H1 (cell line): ENCODE measurements at regions of chr17 and their contacts with region 1.

Region 1: DNA sequence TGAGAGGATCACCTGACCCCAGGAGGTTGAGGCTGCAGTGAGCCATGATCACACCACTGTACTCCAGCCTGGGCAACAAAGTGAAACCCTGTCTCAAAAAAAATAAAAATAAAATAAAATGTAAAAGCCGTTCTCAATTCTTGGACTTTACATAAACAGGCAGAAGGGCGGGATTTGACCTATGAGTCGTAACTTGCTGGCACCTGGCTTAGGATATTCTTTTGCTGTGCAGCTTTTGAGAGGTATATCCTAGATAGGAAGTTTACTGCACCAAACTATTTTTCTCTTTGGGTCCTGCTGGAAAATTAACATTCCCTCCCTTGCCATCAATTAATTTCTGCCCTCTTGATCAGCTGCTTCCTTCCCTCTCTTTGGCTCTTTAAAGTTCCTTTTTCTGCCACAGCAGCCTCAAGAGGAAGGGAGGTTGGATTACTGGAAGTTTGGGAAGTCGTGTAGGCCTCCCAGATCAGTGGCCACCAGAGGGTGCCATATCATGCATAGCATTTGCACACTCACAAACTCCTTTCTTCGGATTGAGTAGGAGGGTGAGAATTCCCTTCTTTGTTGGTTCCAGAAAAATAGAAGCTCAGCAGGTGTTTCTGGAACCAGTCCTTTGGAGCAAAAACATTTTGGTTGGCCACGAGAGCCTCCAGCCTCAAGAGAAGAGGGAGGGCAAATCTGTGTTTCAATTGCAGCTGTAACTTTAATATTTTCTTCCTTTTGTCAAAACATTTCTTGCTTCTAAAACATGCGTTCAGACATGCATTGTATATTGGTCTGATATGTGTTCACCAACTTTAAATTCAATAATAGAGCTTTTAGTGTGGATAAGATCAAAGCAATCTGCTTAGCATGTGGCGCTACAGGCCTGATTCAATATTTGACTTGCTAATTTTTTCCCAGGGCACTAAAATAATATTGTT is 147.3 kb downstream of the CCDC182 start:
- DNase-seq: peak; percentile 49 to 79
- H3K4me3 ChIP-seq: no peak overlapping the region
- H3K27ac ChIP-seq: no peak overlapping the region
- H3K4me1 ChIP-seq: peaks cover 0 to 3% (median 1%) of the 10 kb centered on the region in 4 experiments; a peak in 2 of 7 replicates
- H3K27me3 ChIP-seq: no peaks in the 10 kb centered on the region
- CTCF ChIP-seq: peak; percentile 69 to 85 (median 83)
- EP300 ChIP-seq: no peak
- POLR2A ChIP-seq: no peak
- RAD21 ChIP-seq: peak; percentile 82 to 85

Region 2: GRCh38 chr17:57552114-57552624 is 45.6 kb before region 1 on chr17:
- CTCF ChIA-PET with region 1: interaction called, 26 read pairs
- POLR2A ChIA-PET with region 1: no interaction called
- DNase-seq: peak in 1 of 2 experiments; percentile 82
- H3K4me3 ChIP-seq: no peak overlapping the region
- H3K27ac ChIP-seq: peak overlapping the region; percentile 29; the same call in 1 of the 2 replicates
- H3K4me1 ChIP-seq: peaks cover 8 to 46% (median 25%) of the 10 kb centered on the region in 4 experiments
- H3K27me3 ChIP-seq: no peaks in the 10 kb centered on the region
- CTCF ChIP-seq: peak; percentile 76 to 98 (median 87)
- EP300 ChIP-seq: no peak
- POLR2A ChIP-seq: no peak
- RAD21 ChIP-seq: peak; percentile 56 to 69

Region 3: GRCh38 chr17:57577751-57578607 is 19.8 kb before region 1 on chr17:
- CTCF ChIA-PET with region 1: interaction called, 10 read pairs
- POLR2A ChIA-PET with region 1: no interaction called
- DNase-seq: no peak
- H3K4me3 ChIP-seq: no peak overlapping the region; a peak in 2 of 8 replicates
- H3K27ac ChIP-seq: 0 out of 2 replicates have a peak overlapping the region, but pooled peaks have one; percentile 3
- H3K4me1 ChIP-seq: peaks cover 0 to 14% (median 2%) of the 10 kb centered on the region in 4 experiments; a peak in 3 of 7 replicates
- H3K27me3 ChIP-seq: no peaks in the 10 kb centered on the region
- CTCF ChIP-seq: no peak
- EP300 ChIP-seq: no peak
- POLR2A ChIP-seq: no peak
- RAD21 ChIP-seq: no peak

Region 4: GRCh38 chr17:57622683-57623433 is 25.1 kb after region 1 on chr17:
- CTCF ChIA-PET with region 1: interaction called, 14 read pairs
- POLR2A ChIA-PET with region 1: no interaction called
- DNase-seq: no peak
- H3K4me3 ChIP-seq: no peak overlapping the region
- H3K27ac ChIP-seq: no peak overlapping the region
- H3K4me1 ChIP-seq: no peaks in the 10 kb centered on the region
- H3K27me3 ChIP-seq: no peaks in the 10 kb centered on the region
- CTCF ChIP-seq: no peak
- EP300 ChIP-seq: no peak
- POLR2A ChIP-seq: no peak
- RAD21 ChIP-seq: no peak

Region 5: DNA sequence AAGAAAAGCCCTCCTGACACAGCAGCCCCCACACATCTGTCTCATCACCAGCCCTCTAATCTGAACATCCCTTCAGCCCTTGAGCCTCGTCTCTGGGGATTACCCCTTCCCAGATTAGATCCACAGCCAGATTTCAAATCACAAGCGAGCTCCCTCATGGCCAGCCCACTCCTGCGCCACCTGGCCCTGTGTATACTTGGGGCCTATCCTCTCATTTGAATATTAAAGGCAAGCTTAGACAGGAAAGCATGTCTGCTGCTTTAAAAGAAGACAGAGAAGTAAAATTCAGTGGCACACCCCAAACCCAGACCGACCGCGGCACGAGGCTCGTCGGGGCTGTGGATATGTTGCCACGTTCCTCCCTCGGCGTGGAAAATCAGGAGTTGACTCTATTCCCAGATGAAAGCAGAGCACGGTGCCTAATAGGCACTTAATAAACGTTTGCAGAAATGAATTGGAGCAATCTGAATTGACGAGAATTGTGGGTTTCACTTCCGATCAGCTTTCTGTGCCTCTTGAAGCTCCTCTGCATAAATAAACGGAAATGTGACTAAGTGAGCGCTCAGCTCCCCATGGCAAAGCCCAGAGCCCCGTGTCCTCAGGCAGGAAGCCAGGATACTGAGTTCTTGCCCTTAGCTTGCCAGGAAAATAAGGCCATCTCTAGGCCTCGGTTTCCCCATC is 39.3 kb after region 1 on chr17:
- CTCF ChIA-PET with region 1: interaction called, 15 read pairs
- POLR2A ChIA-PET with region 1: interaction called, 3 read pairs
- DNase-seq: no peak
- H3K4me3 ChIP-seq: no peak overlapping the region
- H3K27ac ChIP-seq: no peak overlapping the region
- H3K4me1 ChIP-seq: peaks cover 0 to 5% (median 4%) of the 10 kb centered on the region in 4 experiments; a peak in 3 of 7 replicates
- H3K27me3 ChIP-seq: no peaks in the 10 kb centered on the region
- CTCF ChIP-seq: no peak
- EP300 ChIP-seq: no peak
- POLR2A ChIP-seq: no peak
- RAD21 ChIP-seq: no peak

Region 6: DNA sequence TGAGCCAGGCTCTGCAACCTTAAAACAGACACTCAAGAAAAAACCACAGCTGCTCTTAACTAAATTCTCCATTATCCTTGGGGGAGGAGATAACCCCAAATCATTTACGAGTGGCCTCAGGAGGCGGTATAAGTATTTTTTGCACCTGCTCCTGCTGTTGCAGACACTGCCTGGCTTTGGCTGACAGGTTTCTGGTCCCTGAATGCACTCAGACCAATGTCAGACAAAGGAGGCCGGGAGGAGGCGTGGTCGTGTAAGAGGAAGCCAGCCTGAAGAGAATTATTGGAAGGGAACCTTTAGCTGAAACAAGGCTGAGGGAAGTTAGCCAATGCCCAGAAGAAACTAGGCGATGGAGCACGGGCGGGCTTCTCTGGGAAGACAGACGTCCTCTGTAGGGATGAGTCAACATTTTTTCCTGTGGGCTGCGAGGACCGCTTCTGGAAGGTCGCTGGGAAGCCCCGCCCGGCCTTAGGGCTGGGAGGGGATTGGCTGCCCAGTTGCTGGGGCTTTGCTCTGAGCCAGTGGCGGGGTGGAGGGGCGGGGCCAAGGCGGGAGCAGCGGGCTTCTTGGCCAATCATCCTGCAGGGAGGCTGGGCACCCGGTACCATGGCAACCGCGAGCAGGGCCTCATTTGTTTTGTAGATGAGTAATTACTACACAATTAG is 65.0 kb after region 1 on chr17:
- CTCF ChIA-PET with region 1: interaction called, 10 read pairs
- POLR2A ChIA-PET with region 1: no interaction called
- DNase-seq: peak; percentile 82 to 97
- H3K4me3 ChIP-seq: peak overlapping the region; percentile 27 to 57 (median 44); a peak in 6 of 8 replicates
- H3K27ac ChIP-seq: no peak overlapping the region
- H3K4me1 ChIP-seq: peaks cover 14 to 24% (median 22%) of the 10 kb centered on the region in 4 experiments
- H3K27me3 ChIP-seq: no peaks in the 10 kb centered on the region
- CTCF ChIP-seq: no peak
- EP300 ChIP-seq: no peak
- POLR2A ChIP-seq: no peak
- RAD21 ChIP-seq: no peak

Region 7: GRCh38 chr17:57739402-57740392 is 141.9 kb after region 1 on chr17:
- CTCF ChIA-PET with region 1: interaction called, 19 read pairs
- POLR2A ChIA-PET with region 1: no interaction called
- DNase-seq: no peak
- H3K4me3 ChIP-seq: no peak overlapping the region
- H3K27ac ChIP-seq: no peak overlapping the region
- H3K4me1 ChIP-seq: no peaks in the 10 kb centered on the region; a peak in 1 of 7 replicates
- H3K27me3 ChIP-seq: no peaks in the 10 kb centered on the region
- CTCF ChIP-seq: peak; percentile 3 to 72 (median 54)
- EP300 ChIP-seq: no peak
- POLR2A ChIP-seq: no peak
- RAD21 ChIP-seq: peak; percentile 66 to 73